WTC11 (cell line): ENCODE measurements at regions of chr1 and their contacts with region 1.

Region 1: GRCh38 chr1:48677306-48678287 is 99.1 kb downstream of the BEND5 start:
- DNase-seq: peak; percentile 74
- ATAC-seq: peak; percentile 82
- H3K4me3 Mint-ChIP-seq: no peak overlapping the region
- H3K27ac Mint-ChIP-seq: no peak overlapping the region
- H3K4me1 Mint-ChIP-seq: peaks cover 34% of the 10 kb centered on the region
- H3K27me3 Mint-ChIP-seq: no peaks in the 10 kb centered on the region
- CTCF ChIP-seq: peak; percentile 66

Region 2: DNA sequence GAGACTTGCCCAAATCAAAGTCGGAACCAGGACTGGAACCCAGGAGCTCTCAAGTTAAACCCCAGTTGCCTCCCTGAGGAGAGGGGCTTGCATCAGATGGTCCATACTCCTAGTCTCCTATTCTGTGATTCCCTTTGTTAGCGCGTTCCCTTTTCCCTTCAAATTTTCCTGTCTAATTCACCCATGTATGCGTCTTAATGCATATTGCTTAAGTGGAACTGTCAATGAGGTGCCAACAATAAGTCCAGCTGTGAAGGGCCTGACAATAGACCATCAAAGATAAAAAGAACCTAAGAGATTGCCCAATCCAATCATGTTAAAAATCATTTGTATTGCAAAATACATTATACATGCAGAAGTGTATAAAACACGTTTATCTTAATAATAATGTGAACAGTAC is 205.0 kb before region 1 on chr1:
- CTCF ChIA-PET with region 1: no interaction called
- POLR2A ChIA-PET with region 1: no interaction called
- DNase-seq: no peak
- ATAC-seq: no peak
- H3K4me3 Mint-ChIP-seq: peak overlapping the region; percentile 96
- H3K27ac Mint-ChIP-seq: no peak overlapping the region
- H3K4me1 Mint-ChIP-seq: peaks cover 27% of the 10 kb centered on the region
- H3K27me3 Mint-ChIP-seq: peaks cover 14% of the 10 kb centered on the region
- CTCF ChIP-seq: no peak

Region 3: DNA sequence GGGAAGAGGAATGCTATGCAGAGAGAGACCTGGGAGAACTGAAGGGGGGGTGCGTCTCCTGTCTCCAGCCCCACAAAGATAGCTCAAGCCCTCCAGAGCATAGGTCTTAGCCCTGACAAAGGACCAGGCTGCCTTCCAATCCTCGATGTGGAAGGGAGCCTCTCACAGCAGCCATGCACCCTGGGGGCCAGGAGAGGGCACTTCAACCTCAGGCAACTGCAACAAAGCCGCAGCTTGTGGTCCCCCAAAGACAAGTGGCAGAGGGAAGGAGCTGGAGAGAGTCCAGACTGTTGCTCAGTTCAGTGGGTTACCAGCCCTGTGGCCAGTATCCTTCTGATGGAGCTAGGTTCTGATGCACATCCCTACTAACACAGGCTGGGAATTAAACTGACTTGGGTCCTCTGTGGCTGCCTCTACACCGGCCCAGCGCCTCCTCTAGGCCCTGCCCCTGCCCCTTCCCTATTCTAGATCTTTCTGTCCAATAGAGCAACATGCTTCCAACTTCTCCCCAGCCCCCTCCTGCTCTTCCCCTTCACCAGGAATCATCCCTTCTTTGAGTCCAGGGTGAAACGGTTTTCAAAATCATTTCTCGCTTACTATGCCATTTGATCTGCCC is 104.8 kb before region 1 on chr1:
- CTCF ChIA-PET with region 1: interaction called, 112 read pairs
- POLR2A ChIA-PET with region 1: no interaction called
- DNase-seq: peak; percentile 87
- ATAC-seq: peak; percentile 99
- H3K4me3 Mint-ChIP-seq: no peak overlapping the region
- H3K27ac Mint-ChIP-seq: no peak overlapping the region
- H3K4me1 Mint-ChIP-seq: 0 out of 2 replicates have a peak, but pooled peaks cover 3% of the 10 kb centered on the region
- H3K27me3 Mint-ChIP-seq: no peaks in the 10 kb centered on the region; the same call in none of the 2 replicates
- CTCF ChIP-seq: peak; percentile 61

Region 4: GRCh38 chr1:48596046-48596445 is 81.6 kb before region 1 on chr1:
- CTCF ChIA-PET with region 1: interaction called, 23 read pairs
- POLR2A ChIA-PET with region 1: no interaction called
- DNase-seq: no peak
- ATAC-seq: peak; percentile 83
- H3K4me3 Mint-ChIP-seq: no peak overlapping the region
- H3K27ac Mint-ChIP-seq: no peak overlapping the region
- H3K4me1 Mint-ChIP-seq: peaks cover 18% of the 10 kb centered on the region
- H3K27me3 Mint-ChIP-seq: no peaks in the 10 kb centered on the region
- CTCF ChIP-seq: no peak

Region 5: GRCh38 chr1:48661726-48662463 is 15.7 kb before region 1 on chr1:
- CTCF ChIA-PET with region 1: interaction called, 18 read pairs
- POLR2A ChIA-PET with region 1: no interaction called
- DNase-seq: no peak
- ATAC-seq: no peak
- H3K4me3 Mint-ChIP-seq: no peak overlapping the region
- H3K27ac Mint-ChIP-seq: no peak overlapping the region
- H3K4me1 Mint-ChIP-seq: peaks cover 10% of the 10 kb centered on the region
- H3K27me3 Mint-ChIP-seq: no peaks in the 10 kb centered on the region; the same call in 1 of the 2 replicates
- CTCF ChIP-seq: no peak

Region 6: GRCh38 chr1:48697066-48697707 is 19.6 kb after region 1 on chr1:
- CTCF ChIA-PET with region 1: interaction called, 65 read pairs
- POLR2A ChIA-PET with region 1: no interaction called
- DNase-seq: peak; percentile 85
- ATAC-seq: peak; percentile 80
- H3K4me3 Mint-ChIP-seq: no peak overlapping the region
- H3K27ac Mint-ChIP-seq: no peak overlapping the region
- H3K4me1 Mint-ChIP-seq: peaks cover 3% of the 10 kb centered on the region
- H3K27me3 Mint-ChIP-seq: no peaks in the 10 kb centered on the region
- CTCF ChIP-seq: peak; percentile 85